Right ventricle myocardium superior (tissue), 1 donor: ENCODE measurements at regions of chr3 and their contacts with region 1.

Region 1: DNA sequence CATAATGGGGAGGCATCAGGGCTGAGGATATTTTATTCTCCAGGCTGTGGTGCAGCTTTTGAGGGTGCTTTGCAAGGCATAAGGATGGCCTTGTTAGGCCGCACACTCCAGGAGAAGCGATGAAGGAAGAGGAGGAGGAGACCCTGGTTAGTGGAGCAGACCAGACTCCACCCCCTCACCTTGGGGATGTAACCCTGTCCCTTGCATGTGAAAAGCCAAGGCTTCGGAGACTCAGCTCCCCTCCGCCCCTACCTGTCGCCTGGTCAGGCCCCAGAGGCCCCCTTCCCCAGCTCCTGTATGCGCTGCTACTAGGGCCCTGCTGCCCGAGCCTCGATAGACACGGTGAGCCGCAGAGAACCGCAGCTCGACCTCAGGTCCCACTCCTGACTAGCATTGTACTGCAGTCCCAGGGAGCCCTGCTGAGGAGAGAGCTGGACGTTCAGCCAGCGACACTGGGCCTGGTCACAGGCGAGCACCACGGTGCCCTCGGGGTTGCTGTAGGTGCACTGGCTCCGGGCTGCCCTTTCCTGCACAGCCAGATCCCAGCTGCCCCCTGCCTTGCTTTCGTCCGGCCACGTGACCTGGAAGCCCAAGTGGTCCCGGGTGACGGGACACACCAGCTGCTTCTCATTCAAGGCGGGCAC is 10.2 kb downstream of the CPN2 start:
- DNase-seq: no peak
- ATAC-seq: no peak

Region 2: DNA sequence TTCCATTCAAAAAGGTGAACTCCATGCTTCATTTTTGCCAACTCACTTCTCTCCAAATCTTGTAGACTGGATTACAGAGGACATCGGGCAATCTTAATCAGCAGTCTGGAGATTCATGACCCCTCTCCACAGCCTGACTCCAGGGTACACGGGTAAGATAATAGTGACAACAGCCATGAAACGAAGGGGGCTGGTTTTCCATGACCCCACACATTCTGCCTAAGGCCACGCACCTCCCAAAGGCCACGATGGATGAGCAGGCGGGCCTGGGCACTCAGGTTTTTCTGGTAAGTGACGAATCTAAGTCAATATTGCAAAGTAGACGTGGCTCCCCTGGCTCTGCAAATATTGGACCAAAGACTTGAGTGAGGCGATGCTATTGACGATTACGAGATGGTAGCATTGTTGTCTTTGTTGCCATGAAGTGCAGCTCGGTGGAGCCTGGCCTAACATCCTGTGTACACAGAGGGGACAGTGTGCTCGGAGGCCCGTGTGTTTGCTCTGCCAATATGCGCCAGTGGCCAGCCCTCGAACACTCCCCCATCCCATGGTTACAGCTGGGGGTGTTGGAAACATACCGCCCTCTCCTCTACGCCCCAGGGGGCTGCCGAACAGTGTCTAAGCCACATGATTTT is 628.8 kb before region 1 on chr3:
- intact Hi-C with region 1: no loop called
- DNase-seq: no peak
- ATAC-seq: no peak

Region 3: DNA sequence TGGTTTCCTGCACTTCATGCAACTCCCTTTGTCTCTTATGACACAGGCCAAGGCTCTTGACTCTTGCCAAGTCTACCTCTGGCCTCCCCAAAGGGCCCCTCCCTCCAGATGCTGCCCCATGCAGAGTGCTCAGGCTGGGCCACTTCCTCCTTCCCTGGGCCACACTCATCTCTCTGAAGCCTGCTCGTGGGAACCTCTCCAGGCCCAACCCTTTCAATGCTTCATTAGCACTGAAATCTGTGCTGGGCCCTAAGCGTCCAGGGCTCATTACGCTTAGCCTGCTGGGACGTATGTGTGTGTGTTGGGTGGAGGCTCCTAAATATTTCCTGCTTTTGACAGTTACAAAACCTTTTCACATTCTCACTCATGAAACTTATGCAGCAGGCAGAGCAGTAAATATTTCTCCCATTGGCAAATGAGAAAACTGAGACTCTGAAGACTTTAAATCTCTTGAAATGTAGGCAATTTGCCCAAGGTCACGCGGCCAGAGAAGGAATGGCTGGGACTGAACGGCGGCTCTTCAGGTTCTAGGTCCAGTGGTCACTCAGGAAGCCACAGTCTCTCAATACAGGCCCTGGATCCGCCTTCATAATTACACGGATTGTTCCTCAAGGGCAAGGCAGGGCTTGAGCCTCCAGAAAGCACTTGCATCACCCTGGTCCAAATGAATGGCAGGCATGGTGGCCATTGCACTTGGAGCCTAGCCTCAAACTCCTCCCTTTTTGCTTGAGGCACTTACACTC is 446.6 kb before region 1 on chr3:
- intact Hi-C with region 1: no loop called
- DNase-seq: peak; percentile 50
- ATAC-seq: peak; percentile 74

Region 4: DNA sequence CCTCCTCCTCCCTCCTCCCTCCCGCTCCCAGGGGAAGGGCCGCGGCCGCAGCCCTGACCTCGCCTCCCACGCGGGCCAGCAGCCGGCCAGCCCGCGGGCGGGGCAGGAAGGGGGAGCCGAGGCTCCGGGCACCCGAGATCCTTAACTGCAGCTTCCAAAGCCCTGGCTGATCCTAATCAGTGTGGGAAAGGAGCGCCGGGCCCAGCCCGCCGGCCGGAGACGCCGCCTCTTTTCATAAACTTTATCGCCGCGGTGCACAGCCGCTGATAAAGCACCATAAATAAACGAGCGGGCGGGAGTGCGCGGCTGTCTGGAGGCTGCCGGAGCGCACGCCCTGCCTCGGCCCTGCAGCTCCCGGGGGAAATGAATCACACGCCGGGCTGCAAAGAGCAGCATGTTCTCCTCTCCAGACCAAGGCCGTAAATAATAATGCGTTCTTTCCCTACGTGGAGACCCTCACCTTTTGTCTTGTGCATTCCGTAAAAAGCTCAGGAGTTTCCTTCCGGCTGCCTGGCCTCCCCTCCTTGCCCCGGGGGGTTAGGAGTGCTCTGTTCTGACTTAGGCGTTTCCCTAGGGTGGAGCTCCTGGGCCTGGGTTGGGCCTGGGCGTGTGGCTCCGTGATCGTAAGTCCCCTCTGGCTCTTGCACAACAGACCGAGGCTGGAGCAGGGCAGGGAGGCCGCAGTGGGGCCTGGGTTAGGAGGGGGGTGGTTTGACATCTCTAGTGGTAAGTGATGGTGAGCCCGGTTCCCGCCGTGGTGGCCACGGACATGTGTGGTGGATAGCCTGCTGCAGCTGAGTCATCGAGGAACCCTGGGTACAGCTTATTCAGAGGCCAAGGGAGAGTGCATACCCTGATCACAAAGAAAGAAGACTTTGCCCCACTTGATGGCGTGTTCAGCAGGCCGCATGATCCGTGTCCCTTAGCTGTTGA is 337.5 kb before region 1 on chr3:
- intact Hi-C with region 1: no loop called
- DNase-seq: peak; percentile 93
- ATAC-seq: peak; percentile 93

Region 5: DNA sequence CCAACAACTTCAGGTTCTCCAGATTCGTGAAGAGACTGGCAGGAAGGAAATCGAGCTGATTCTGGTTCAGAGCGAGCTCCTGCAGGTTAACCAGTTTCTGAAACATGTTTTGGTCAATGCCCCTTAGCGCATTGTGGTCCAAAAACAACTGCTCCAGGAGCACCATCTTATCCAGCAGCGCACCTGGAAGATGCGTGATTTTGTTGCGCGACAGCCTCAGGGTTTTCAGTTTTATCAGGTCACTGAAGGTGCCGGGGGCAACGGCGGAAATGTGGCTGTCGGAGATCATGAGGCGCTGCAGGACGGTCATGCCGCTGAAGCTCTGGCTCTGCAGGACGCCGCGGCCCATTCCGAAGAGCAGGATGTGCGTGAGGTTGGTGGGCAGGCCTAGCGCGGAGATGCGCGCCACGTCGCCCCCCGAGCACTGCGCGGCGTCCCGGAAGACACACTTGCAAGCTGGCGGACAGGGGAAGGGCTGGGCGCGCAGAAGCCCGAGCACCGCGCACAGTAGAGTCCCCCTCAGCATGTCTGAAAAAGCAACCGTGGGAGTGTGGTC is 57.0 kb after region 1 on chr3:
- intact Hi-C with region 1: loop called (anchors 2 kb)
- DNase-seq: no peak
- ATAC-seq: peak; percentile 46